ENCODE measurements at regions of chr4 and their contacts with region 1.

Region 1: DNA sequence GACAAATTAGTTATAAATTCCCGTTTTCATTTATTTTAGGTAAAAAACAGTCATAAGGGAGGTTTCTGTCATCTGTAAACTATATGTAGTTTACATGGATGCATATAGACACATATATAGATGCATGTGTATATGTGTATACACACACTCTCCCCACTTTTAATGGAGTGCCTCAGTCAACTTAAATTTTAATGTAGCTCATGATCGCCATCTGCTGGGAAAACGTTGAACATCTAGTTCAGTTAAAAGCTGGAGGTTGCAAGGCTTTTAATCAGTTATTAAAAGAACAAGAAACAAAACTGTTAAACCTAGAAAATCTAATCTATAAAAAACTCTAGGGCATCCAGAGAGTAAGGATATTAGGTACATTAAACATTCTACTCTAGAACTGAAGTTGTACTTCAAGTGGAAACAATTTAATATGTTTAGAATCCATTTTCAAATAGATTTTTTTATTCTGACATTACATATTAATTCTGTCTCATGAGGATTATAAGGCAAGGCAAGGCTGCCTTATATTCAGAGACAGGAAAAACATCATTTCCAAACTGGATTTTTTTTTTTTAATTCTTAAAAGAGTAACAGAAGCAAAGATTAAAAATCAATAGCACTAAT is 122.6 kb downstream of the SHISA3 start:
- DNase-seq: no peak
- ATAC-seq: peak; percentile 42
- H3K4me3 Mint-ChIP-seq: no peak overlapping the region
- H3K27ac Mint-ChIP-seq: no peak overlapping the region
- H3K4me1 Mint-ChIP-seq: peaks cover 6% of the 10 kb centered on the region
- H3K27me3 Mint-ChIP-seq: no peaks in the 10 kb centered on the region
- CTCF ChIP-seq: peak; percentile 59

Region 2: GRCh38 chr4:41957634-41958033 is 562.3 kb before region 1 on chr4:
- CTCF ChIA-PET with region 1: interaction called, 10 read pairs
- POLR2A ChIA-PET with region 1: no interaction called
- intact Hi-C with region 1: loop called (anchors 1 kb)
- DNase-seq: no peak
- ATAC-seq: peak; percentile 40
- H3K4me3 Mint-ChIP-seq: no peak overlapping the region
- H3K27ac Mint-ChIP-seq: no peak overlapping the region
- H3K4me1 Mint-ChIP-seq: no peaks in the 10 kb centered on the region
- H3K27me3 Mint-ChIP-seq: no peaks in the 10 kb centered on the region
- CTCF ChIP-seq: no peak

Measured in activated B cell treated with CpG ODN at 0.5 μM for 24 hours (primary cell).